ENCODE measurements at regions of chr9 and their contacts with region 1.

Region 1: DNA sequence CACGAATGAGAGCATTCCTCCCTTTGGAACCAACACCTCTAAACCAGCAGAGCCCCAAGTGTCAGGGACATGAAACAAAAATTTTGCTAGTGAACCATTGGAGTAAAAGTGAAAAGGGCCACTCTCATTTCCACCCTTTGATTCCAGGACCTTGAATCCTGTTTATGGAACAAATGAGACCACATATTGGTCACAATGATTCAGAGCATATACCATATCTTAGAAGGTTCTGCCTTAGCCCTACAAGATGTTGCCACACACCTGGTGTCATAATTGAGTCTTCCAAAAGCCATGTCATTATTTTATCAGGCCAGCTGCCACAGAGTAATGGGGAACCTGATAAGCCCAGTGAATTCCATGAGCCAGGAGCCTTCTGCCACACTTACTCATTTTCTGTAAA is 66.3 kb upstream of the ZBTB43 start:
- DNase-seq: no peak
- H3K4me3 ChIP-seq: no peak overlapping the region
- H3K27ac ChIP-seq: no peak overlapping the region
- H3K4me1 ChIP-seq: no peaks in the 10 kb centered on the region
- H3K27me3 ChIP-seq: no peaks in the 10 kb centered on the region
- CTCF ChIP-seq: no peak

Region 2: GRCh38 chr9:126752376-126752775 is 13.8 kb after region 1 on chr9:
- CTCF ChIA-PET with region 1: no interaction called
- dilution Hi-C with region 1: no loop called
- in situ Hi-C with region 1: no loop called
- intact Hi-C with region 1: loop called (anchors 2 kb)
- DNase-seq: peak; percentile 31
- H3K4me3 ChIP-seq: no peak overlapping the region
- H3K27ac ChIP-seq: no peak overlapping the region
- H3K4me1 ChIP-seq: peaks cover 11% of the 10 kb centered on the region
- H3K27me3 ChIP-seq: peaks cover 2% of the 10 kb centered on the region
- CTCF ChIP-seq: no peak